ENCODE measurements at regions of chr16 and their contacts with region 1.

Region 1: DNA sequence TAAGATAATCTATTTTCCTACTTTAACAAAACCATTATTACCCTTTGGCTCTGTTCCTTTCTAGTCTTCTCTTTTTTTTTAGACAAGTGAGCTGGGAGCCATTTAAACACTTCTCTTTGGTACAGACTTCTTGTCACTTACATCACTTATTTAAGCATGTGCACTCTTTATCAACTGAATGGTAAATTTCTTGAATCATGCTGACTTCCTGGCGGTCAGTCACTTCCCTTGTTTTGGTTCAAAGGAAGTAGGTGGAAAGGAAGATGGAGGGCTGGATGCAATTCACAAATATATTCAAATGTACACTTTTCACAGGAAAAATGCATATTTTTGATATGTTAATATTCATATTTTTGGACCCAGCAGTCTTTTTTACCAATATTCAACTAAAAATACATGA is 97.1 kb downstream of the ITFG1 start:
- DNase-seq: no peak
- CTCF ChIP-seq: no peak

Region 2: GRCh38 chr16:46883690-46884512 is 479.9 kb before region 1 on chr16 and contains the start of gene GPT2:
- CTCF ChIA-PET with region 1: no interaction called
- POLR2A ChIA-PET with region 1: no interaction called
- DNase-seq: peak; percentile 92
- CTCF ChIP-seq: no peak

Region 3: DNA sequence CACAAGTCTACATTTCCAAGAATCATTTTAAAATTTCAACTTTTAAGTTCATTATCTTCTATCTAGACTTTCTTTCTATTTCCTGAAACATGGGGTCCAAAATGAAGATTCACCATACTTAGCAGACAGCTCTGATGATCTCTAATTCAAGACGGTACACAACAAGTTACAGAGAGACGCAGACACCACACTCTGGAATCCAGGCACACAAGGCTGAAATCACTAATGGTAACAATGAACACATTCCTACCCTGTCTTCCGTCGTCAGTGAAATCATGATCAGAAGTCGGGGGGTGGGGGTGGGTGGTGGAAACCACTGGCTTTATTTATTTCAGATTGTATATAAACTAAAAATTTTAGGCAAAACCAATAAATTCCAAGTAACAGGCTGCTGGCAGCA is 18.6 kb after region 1 on chr16:
- CTCF ChIA-PET with region 1: interaction called, 17 read pairs
- POLR2A ChIA-PET with region 1: no interaction called
- DNase-seq: no peak
- CTCF ChIP-seq: no peak